ENCODE measurements at regions of chr21 and their contacts with region 1.

Region 1: DNA sequence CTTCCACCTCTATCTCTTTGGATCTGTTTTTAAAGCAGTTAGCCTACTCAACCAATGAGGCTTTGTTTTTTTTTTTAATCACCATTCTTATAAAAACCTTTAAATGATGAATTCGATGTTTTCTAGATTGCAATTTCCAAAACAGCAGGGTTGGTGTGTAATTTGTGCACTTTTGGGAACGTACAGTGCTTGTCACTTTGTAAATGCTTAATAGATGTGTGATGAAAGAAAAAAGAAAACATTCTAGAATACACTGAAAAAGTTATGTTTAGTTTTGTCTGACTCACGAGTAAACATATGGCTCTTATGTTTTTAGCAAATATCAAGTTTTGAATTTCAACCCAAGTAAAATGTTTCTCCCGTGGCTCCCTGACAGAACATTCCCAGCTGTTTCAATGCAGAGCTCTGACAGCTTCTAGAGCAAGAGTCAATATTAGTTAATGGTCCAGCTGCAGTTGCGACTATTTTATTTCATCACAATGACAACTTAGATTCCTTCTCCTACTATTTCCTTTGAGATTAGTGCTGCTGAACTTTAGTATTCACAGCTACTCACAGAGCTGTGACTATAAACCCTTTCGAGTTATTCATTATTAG is 362.5 kb upstream of the ADAMTS5 start:
- DNase-seq: peak; percentile 65
- H3K4me3 ChIP-seq: no peak overlapping the region
- H3K27ac ChIP-seq: no peak overlapping the region
- H3K27me3 ChIP-seq: no peaks in the 10 kb centered on the region
- CTCF ChIP-seq: no peak

Region 2: GRCh38 chr21:27300770-27301169 is 28.6 kb before region 1 on chr21:
- CTCF ChIA-PET with region 1: no interaction called
- POLR2A ChIA-PET with region 1: interaction called, 11 read pairs
- DNase-seq: peak; percentile 50
- H3K4me3 ChIP-seq: no peak overlapping the region
- H3K27ac ChIP-seq: peak overlapping the region; percentile 53
- H3K27me3 ChIP-seq: no peaks in the 10 kb centered on the region
- CTCF ChIP-seq: no peak

Region 3: GRCh38 chr21:27570306-27570868 is 241.0 kb after region 1 on chr21:
- CTCF ChIA-PET with region 1: no interaction called
- POLR2A ChIA-PET with region 1: interaction called, 12 read pairs
- DNase-seq: peak; percentile 87
- H3K4me3 ChIP-seq: no peak overlapping the region
- H3K27ac ChIP-seq: peak overlapping the region; percentile 82
- H3K27me3 ChIP-seq: no peaks in the 10 kb centered on the region
- CTCF ChIP-seq: no peak

Measured in AG04450 (cell line).